Transverse colon (tissue), 4 donors: ENCODE measurements at regions of chr13 and their contacts with region 1.

Region 1: GRCh38 chr13:41652727-41653361 is 195.5 kb downstream of the RGCC start:
- DNase-seq: no peak
- H3K4me3 ChIP-seq: no peak overlapping the region
- H3K27ac ChIP-seq: no peak overlapping the region
- H3K4me1 ChIP-seq: peaks cover 4 to 14% (median 10%) of the 10 kb centered on the region in 4 donors
- H3K27me3 ChIP-seq: no peaks in the 10 kb centered on the region
- CTCF ChIP-seq: peak; percentile 42 to 65 (median 45)
- EP300 ChIP-seq: no peak
- POLR2A ChIP-seq: no peak

Region 2: DNA sequence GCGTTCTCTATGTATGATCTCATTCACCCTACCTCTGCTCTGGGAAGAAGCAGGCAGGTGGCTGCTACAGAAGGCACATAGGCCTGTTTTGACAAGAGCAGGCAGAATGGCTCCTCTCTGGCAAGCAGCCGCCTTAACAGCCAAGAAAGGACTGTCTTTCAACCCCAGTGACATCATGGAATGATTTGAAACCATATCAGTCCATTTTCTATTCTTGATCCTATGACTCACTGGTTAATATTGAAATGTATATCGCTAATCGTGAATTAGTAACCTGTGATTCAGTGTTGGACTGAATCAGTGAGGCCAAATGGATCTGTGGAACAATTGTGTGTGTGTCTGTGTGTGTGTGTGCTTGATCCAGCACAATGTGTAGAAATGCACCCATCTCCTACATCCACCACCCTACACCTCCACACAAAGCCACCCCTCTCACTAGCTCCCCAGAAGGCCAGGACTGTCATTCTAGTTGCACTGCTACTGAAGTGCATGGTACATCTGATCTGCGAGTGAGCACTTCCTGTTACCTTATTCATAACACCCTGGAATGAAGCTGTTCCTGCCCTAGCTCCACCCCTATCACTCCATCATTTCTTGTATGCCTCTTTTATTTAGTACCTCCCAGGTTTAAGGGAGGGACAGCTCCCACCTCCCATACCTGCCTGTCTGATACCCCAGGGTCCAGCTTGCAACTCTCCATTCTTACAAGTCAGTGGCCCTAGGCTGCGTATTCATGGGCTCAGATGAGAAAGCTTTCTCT is 1446.4 kb before region 1 on chr13:
- in situ Hi-C with region 1: no loop called
- intact Hi-C with region 1: no loop called
- DNase-seq: no peak
- H3K4me3 ChIP-seq: no peak overlapping the region
- H3K27ac ChIP-seq: peak overlapping the region in 2 of 4 donors; percentile 19 to 23
- H3K4me1 ChIP-seq: no peaks in the 10 kb centered on the region
- H3K27me3 ChIP-seq: no peaks in the 10 kb centered on the region
- CTCF ChIP-seq: no peak
- EP300 ChIP-seq: no peak
- POLR2A ChIP-seq: peak; percentile 25

Region 3: DNA sequence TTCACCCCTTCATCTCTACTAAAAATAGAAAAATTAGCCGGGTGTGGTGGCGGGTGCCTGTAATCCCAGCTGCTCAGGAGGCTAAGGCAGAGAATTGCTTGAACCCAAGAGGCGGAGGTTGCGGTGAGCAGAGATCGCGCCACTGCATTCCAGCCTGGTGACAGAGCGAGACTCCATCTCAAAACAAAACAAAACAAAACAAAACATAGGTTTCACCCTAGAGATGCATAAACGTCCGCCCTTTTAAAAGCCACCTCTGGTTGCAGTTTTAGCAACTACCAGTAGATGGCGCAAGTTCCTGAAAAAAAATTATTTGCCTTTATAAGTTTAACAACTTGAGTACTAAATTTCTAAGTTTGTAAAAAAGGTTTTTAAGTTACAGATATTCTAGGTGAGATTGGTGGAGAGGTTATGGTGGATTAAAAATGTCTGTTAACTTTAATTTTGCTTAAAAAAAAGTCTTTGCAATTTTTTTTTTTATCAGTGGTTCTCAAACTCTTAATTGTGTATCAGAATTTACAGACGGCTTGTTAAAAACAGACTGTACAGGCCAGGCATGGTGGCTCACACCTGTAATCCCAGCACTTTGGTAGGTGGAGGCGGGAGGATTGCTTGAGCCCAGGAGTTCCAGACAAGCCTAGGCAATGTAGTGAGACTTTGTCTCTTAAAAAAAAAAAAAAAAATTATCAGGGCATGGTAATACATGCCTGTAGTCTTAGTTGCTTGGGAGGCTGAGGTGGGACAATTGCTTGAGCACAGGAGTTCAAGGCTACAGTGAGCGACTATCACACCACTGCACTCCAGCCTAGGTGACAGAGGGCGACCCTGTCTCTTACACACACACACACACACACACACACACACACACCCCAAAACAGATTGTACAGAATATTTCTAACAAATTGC is 299.7 kb before region 1 on chr13:
- in situ Hi-C with region 1: loop called in 1 of 4 experiments (anchors 10 kb)
- intact Hi-C with region 1: no loop called
- DNase-seq: no peak
- H3K4me3 ChIP-seq: no peak overlapping the region
- H3K27ac ChIP-seq: no peak overlapping the region
- H3K4me1 ChIP-seq: peaks cover 0 to 4% (median 0%) of the 10 kb centered on the region in 4 donors
- H3K27me3 ChIP-seq: no peaks in the 10 kb centered on the region
- CTCF ChIP-seq: peak; percentile 77 to 91 (median 84)
- EP300 ChIP-seq: no peak
- POLR2A ChIP-seq: no peak